Cardiac septum (tissue), 1 donor: ENCODE measurements at regions of chr2 and their contacts with region 1.

Region 1: GRCh38 chr2:39696838-39697237 is 31.1 kb downstream of the TMEM178A start:
- DNase-seq: no peak

Region 2: DNA sequence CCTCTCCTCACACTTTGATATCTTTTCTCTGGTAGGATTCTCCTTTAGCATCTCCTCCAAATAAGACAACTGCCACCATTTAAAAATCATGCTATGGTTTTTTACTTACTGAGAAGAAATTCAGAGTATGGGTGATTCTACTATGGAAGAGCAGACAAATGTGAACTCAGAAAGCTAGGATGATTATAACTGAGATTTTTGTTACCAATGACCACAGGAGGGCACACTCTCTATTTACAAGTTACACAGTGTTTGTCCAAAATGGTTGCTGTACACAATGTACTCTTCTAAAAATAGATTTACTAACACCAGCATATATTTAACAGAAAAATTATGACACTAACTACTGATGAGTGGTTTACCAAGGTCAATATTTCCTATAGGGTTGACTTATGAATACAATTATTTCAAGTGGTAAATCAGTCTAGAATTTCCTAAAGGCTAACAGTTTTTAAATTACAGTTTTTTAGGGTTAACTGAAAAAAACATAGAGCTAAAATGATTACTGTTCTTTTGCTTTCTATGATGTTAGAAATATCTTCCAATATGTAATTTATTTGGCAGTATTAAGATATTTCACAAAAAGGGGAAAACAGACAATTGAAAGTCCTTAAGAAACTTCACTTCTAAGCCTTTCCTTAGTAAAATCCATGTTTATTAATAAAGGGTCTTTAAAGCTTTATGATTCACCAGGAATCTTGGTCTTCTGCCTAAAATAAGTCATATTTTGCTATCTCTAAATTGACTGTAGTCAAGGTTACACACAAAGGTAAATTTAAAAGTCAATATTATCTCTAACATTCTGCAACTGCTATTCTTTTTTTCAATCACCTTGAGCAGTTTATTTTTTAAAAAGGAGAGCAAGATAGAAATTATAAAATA is 317.0 kb before region 1 on chr2:
- intact Hi-C with region 1: loop called (anchors 2 kb)
- DNase-seq: no peak

Region 3: DNA sequence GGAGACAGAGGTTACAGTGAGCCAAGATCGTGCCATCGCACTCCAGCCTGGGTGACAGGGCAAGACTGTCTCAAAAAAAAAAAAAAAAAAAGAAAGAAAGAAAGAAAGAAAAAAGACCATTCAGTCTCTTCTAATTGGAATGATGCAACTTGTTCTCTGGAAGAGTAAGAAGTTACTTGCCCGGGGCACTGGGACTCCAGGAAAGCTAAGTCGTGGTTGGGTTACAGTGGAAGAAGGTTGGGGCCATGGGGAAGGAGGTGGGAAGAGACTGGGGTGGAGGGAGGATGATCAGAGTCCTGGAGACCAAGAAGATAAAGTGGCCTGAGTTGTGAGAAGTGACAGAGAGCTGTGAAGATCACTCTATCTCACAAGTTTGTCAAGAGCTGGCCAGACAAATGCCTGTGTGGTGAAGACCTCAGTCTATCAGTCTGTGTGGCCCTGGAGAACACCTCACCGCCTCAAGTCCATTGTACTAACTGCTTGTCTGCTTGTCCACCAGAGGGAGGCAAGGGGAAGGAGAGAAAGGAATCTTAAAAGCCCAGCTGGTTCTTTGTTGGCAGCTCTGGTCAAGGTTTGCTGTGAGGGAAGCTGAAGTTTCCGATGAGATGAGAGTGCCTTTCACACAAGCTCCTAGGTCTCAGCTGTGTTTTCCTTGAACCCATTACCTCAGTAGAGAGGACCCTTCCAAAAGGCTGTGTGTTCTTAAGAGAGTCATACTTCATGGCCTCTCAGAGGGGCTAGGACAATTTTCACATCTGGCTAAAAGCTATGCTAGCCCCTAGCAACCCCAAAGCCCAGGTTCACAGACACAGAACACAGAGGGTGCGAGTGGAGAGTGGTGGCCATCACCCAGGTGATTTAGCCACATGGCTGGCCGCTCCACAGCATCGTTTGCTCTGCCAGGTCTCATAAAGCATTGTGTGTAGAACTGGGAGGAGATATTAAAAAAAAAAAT is 103.1 kb before region 1 on chr2:
- intact Hi-C with region 1: loop called (anchors 5 kb)
- DNase-seq: no peak